ENCODE measurements at regions of chr6 and their contacts with region 1.

Region 1: GRCh38 chr6:32692019-32692418 is 25.6 kb upstream of the HLA-DQB1 start:
- H3K4me3 ChIP-seq: no peak overlapping the region
- H3K27ac ChIP-seq: no peak overlapping the region
- H3K4me1 ChIP-seq: no peaks in the 10 kb centered on the region
- CTCF ChIP-seq: 0 out of 2 replicates have a peak, but pooled peaks have one; percentile 22

Region 2: DNA sequence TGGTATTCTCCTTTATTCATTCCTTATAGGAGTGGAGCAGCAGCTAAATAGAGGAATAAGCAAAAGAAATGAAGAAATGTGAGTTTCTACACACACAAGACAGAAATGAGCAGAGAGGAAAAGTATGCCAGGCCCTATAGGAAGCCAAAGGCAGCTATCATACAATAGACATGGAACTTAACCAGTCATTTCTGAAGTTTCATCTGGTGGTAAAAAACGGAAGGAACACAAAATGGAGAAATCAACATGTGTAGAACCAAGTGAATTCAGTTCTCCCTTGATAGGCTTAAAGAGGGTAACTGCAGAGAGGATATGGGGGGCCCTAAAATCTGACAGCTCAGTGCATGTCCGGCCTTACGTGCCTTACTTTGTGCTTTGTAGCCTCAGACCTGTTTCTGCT is 364.9 kb before region 1 on chr6:
- CTCF ChIA-PET with region 1: no interaction called
- POLR2A ChIA-PET with region 1: no interaction called
- H3K4me3 ChIP-seq: no peak overlapping the region
- H3K27ac ChIP-seq: no peak overlapping the region
- H3K4me1 ChIP-seq: peaks cover 8% of the 10 kb centered on the region; the same call in 1 of the 2 replicates
- CTCF ChIP-seq: no peak

Region 3: DNA sequence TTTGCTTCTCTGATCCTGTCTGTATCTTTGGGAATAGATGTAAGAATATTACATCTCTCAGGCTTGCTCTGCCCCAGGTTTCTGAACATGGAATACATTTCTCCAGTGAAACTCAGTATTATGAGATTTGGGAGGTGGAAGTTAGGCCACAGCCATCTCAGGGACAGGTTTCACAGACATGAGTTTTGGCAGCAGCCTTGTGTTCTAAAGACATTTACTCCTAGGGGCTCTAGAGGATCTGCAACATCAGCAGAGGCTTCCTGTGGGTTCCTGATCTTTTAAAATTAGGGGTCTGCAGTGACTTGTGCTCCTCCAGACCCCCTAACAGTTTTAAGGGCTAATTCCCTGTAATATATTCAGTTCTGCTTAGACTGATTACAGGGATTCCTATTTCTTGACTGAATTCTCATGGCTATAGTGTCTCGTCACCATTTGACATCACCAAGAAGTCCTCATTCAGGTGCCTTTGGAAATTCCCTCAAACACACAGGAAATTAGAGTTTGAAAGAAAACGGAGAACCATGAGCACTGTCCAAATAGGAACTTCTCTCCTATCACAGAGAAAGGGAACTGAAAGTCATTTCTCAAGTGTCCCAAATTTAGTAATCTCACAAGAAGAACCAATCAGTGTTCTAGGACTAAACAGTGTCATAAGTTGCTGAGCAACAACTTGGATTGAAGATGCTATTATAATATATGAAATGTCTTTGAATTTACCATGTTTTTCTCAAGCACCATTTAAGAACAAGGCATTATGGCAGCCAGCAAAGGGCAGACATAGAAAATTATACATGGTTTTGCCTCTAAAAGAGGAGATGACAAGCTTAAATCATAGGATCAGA is 254.8 kb before region 1 on chr6:
- CTCF ChIA-PET with region 1: interaction called, 24 read pairs
- POLR2A ChIA-PET with region 1: no interaction called
- H3K4me3 ChIP-seq: no peak overlapping the region
- H3K27ac ChIP-seq: no peak overlapping the region
- H3K4me1 ChIP-seq: no peaks in the 10 kb centered on the region
- CTCF ChIP-seq: no peak

Region 4: GRCh38 chr6:32622545-32623401 is 69.2 kb before region 1 on chr6:
- CTCF ChIA-PET with region 1: interaction called, 97 read pairs
- POLR2A ChIA-PET with region 1: interaction called, 5 read pairs
- H3K4me3 ChIP-seq: no peak overlapping the region
- H3K27ac ChIP-seq: no peak overlapping the region
- H3K4me1 ChIP-seq: peaks cover 18% of the 10 kb centered on the region
- CTCF ChIP-seq: no peak

Region 5: DNA sequence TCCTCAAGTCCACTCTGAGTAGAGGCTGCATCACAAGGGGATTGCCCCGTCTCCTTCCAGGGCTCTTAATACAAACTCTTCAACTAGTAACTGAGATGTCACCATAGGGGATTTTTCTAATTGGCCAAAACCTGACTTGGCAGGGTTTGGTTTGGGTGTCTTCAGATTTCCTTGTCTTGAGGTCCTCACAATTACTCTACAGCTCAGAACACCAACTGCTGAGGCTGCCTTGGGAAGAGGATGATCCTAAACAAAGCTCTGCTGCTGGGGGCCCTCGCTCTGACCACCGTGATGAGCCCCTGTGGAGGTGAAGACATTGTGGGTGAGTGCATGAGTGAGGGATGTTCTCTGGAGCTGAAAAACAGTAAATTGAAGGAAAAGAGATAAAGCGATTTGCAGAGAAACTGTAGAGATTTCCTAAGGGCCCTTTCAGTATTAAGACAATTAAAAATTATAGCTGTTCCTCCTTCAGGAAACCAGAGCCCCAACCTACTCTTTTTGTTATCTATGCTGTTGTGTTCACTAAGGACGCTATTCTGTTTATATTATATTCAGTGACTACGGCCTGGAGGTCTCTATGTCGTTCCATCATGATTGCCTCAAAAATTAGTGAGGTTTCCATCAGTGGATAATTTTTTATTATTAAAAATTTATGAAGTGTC is 54.7 kb before region 1 on chr6 and contains the start of gene HLA-DQA1:
- CTCF ChIA-PET with region 1: interaction called, 15 read pairs
- POLR2A ChIA-PET with region 1: no interaction called
- H3K4me3 ChIP-seq: no peak within 1 kb of the TSS
- H3K27ac ChIP-seq: peak within 1 kb of the TSS; percentile 21; the same call in 1 of the 2 replicates
- H3K4me1 ChIP-seq: peaks cover 17% of the 10 kb centered on the region
- CTCF ChIP-seq: no peak

Measured in HEK293 (cell line).